Activated CD4-positive, alpha-beta memory T cell treated with anti-CD3 and anti-CD28 coated beads for 36 hours (primary cell): ENCODE measurements at regions of chr9 and their contacts with region 1.

Region 1: DNA sequence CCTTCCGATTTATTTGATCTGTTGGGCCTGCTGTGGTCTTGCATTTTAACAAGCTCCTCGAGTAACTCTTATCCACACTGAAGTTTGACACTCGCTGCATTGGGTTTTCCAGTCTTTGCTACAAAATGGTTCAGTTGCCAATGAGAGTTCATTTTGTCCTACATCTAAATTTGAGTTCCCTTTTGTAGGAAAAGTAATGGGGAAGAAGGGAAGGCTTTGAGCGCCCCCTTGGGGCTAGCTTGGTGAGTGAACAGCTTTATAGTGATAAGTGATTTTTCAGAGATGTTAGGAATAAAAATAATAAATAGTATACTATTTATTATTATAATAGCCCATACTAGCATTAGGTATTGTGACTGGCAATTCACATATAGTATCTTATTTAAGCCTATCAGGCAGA is 89.9 kb upstream of the GNAQ start:
- DNase-seq: peak; percentile 76
- H3K4me3 Mint-ChIP-seq: no peak overlapping the region
- H3K27ac Mint-ChIP-seq: no peak overlapping the region
- H3K4me1 Mint-ChIP-seq: peaks cover 41% of the 10 kb centered on the region
- H3K27me3 Mint-ChIP-seq: no peaks in the 10 kb centered on the region

Region 2: GRCh38 chr9:77909306-77909705 is 212.2 kb before region 1 on chr9:
- CTCF ChIA-PET with region 1: no interaction called
- POLR2A ChIA-PET with region 1: no interaction called
- intact Hi-C with region 1: loop called (anchors 2 kb)
- DNase-seq: peak; percentile 27
- H3K4me3 Mint-ChIP-seq: peak overlapping the region; percentile 44
- H3K27ac Mint-ChIP-seq: peak overlapping the region; percentile 77
- H3K4me1 Mint-ChIP-seq: peaks cover 44% of the 10 kb centered on the region
- H3K27me3 Mint-ChIP-seq: no peaks in the 10 kb centered on the region

Region 3: GRCh38 chr9:77977210-77977611 is 144.3 kb before region 1 on chr9:
- CTCF ChIA-PET with region 1: interaction called, 26 read pairs
- POLR2A ChIA-PET with region 1: no interaction called
- intact Hi-C with region 1: loop called (anchors 1 kb)
- DNase-seq: peak; percentile 72
- H3K4me3 Mint-ChIP-seq: no peak overlapping the region
- H3K27ac Mint-ChIP-seq: peak overlapping the region; percentile 31
- H3K4me1 Mint-ChIP-seq: peaks cover 51% of the 10 kb centered on the region
- H3K27me3 Mint-ChIP-seq: no peaks in the 10 kb centered on the region

Region 4: GRCh38 chr9:78074385-78075291 is 46.9 kb before region 1 on chr9:
- CTCF ChIA-PET with region 1: interaction called, 8 read pairs
- POLR2A ChIA-PET with region 1: no interaction called
- intact Hi-C with region 1: loop called (anchors 1 kb)
- DNase-seq: peak; percentile 45
- H3K4me3 Mint-ChIP-seq: peak overlapping the region; percentile 3
- H3K27ac Mint-ChIP-seq: peak overlapping the region; percentile 77
- H3K4me1 Mint-ChIP-seq: peaks cover 49% of the 10 kb centered on the region
- H3K27me3 Mint-ChIP-seq: no peaks in the 10 kb centered on the region

Region 5: GRCh38 chr9:78213712-78214111 is 92.2 kb after region 1 on chr9:
- CTCF ChIA-PET with region 1: interaction called, 5 read pairs
- POLR2A ChIA-PET with region 1: no interaction called
- intact Hi-C with region 1: loop called (anchors 2 kb)
- DNase-seq: no peak
- H3K4me3 Mint-ChIP-seq: no peak overlapping the region
- H3K27ac Mint-ChIP-seq: no peak overlapping the region
- H3K4me1 Mint-ChIP-seq: peaks cover 40% of the 10 kb centered on the region
- H3K27me3 Mint-ChIP-seq: no peaks in the 10 kb centered on the region

Region 6: GRCh38 chr9:78296893-78297671 is 175.6 kb after region 1 on chr9 and contains the start of gene PSAT1:
- CTCF ChIA-PET with region 1: no interaction called
- POLR2A ChIA-PET with region 1: no interaction called
- intact Hi-C with region 1: loop called (anchors 5 kb)
- DNase-seq: peak; percentile 96
- H3K4me3 Mint-ChIP-seq: peak within 1 kb of the TSS; percentile 89
- H3K27ac Mint-ChIP-seq: peak within 1 kb of the TSS; percentile 87
- H3K4me1 Mint-ChIP-seq: peaks cover 44% of the 10 kb centered on the region
- H3K27me3 Mint-ChIP-seq: no peaks in the 10 kb centered on the region
- total RNA-seq, gene PSAT1: 132 to 137 TPM